Common myeloid progenitor, CD34-positive (primary cell): ENCODE measurements at regions of chr4 and their contacts with region 1.

Region 1: DNA sequence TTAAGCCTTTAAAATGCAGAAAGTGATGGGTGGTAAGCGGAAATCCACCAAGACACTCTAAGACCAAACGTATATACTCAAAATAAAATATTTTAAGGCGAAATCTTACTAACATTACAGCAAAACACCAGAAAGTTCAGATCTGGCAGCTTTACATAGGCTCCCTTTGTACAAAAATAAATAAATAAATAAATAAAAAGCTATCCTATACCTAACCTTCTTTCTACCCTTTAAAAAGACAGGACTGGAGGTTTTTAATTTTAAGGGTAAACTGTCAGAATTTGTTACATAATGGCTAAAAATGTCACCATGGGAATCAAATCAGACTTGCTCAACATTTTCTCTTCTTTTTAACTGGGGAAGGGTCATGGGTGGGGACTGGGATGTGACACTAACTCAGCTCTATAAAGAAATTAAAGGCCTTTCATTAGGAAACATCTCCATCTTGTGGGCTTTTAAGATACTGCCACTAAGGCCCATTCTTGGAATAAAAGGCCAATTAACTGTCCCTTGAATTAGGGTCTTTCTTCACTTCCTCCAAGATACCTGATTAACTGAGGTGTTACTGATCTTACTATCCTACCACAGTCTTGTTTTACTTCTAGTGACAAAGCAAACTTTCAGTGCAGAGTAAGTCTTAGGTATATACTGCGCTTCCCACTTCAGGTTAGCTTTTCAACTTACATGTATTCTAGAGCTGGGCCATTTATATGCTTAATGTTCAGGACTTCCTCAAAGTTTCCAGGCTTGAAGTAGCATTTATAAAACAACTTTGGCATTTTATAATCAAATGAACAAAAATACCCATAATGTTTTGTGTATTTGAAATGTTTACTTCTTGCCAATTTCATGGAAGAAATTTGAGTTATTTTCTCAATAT is 13.3 kb downstream of the HNRNPD start:
- DNase-seq: peak; percentile 64 to 71 (median 70)
- H3K4me3 ChIP-seq: no peak overlapping the region
- H3K27ac ChIP-seq: peak overlapping the region; percentile 16 to 63
- H3K4me1 ChIP-seq: peaks cover 17 to 67% (median 31%) of the 10 kb centered on the region in 4 experiments
- H3K27me3 ChIP-seq: no peaks in the 10 kb centered on the region

Region 2: GRCh38 chr4:82275431-82276331 is 84.9 kb before region 1 on chr4:
- CTCF ChIA-PET with region 1: interaction called, 16 read pairs
- POLR2A ChIA-PET with region 1: no interaction called
- DNase-seq: peak in 1 of 3 donors; percentile 7
- H3K4me3 ChIP-seq: no peak overlapping the region
- H3K27ac ChIP-seq: no peak overlapping the region
- H3K4me1 ChIP-seq: peaks cover 0 to 4% (median 2%) of the 10 kb centered on the region in 4 experiments
- H3K27me3 ChIP-seq: no peaks in the 10 kb centered on the region

Region 3: DNA sequence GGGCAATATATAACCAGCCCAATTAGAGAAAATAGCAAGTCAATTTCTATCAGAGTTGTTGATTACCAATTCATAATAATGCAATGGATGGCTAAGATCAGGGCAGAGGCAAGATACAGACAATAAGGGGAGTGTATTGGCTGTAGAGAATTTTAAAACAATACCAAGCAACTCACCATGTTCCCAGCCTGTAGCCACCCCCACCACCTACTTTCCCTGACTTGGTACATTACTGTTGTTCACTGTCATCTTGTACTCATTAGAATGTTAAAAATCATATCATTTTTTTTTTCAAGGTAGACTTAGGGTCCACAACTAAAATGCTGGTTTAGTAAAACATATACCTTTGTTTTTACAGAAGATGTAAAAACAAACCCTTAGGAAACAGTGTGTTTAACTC is 14.4 kb before region 1 on chr4:
- CTCF ChIA-PET with region 1: interaction called, 10 read pairs
- POLR2A ChIA-PET with region 1: interaction called, 3 read pairs
- DNase-seq: no peak
- H3K4me3 ChIP-seq: no peak overlapping the region
- H3K27ac ChIP-seq: no peak overlapping the region
- H3K4me1 ChIP-seq: no peaks in the 10 kb centered on the region
- H3K27me3 ChIP-seq: no peaks in the 10 kb centered on the region

Region 4: DNA sequence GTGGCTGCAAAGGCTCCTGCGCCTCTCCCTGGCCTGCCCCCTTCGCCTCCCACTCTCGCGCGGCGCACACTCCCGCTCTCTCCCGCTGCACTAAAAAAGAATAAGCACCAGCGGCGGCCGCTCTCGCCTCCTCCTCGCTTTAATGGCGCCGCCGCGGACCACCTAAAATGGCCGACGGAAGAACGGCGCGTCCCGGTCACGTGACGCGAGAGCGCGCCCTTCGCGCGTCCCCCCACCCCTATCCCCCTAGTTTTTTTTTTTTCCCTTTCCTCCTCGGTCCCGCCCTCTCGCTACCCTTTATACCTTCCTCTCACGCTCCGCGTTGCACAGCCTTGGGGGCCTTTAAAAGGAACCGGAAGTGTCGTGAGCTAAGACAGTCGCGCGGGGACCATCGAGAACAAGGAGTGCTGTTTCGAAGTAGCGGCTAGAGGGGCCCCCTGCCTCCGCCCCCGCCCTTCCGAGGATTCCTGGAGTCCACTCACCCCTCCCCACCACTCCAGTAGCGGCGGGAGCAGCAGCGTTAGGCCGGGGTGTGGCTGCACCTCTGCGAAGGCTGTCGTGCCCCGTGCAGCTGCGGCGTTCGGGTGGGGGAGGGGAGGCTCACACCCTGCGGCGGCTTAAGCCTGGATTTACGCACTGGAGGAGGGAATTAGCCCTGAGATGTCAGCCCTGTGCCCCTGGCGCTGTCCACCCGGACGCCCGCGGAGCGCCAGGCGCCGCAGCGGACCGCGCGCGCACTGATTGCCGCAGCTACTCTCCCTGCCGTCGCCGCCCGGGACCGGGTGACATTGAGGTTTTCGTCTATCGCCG is 13.5 kb after region 1 on chr4 and contains the start of gene HNRNPD:
- CTCF ChIA-PET with region 1: interaction called, 27 read pairs
- POLR2A ChIA-PET with region 1: interaction called, 6 read pairs
- DNase-seq: peak; percentile 100
- H3K4me3 ChIP-seq: peak within 1 kb of the TSS; percentile 89 to 100 (median 100)
- H3K27ac ChIP-seq: peak within 1 kb of the TSS; percentile 97 to 98
- H3K4me1 ChIP-seq: peaks cover 21 to 45% (median 32%) of the 10 kb centered on the region in 4 experiments
- H3K27me3 ChIP-seq: no peaks in the 10 kb centered on the region